Cardiac septum (tissue), 1 donor: ENCODE measurements at regions of chr1 and their contacts with region 1.

Region 1: GRCh38 chr1:157156058-157156541 is 17.9 kb upstream of the ETV3 start:
- DNase-seq: peak; percentile 90

Region 2: DNA sequence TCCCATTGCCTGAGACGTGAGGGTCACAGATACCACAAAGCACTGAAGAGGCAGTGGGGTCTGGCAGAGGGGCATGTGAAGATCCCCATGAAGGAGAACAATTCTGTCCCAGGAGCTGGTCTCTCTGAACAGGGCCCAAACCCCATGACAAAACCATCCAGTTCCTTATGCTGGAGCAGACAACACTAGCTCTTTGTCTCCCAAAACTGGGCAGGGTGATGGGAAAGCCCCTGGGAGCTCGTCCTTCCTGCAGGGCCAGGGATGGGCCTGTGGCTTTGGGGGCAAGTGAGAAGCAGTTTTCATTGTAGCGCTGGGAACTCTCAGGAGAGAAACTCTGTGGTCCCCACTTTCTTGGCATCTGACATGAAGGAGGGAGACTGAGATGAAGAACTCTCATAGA is 65.3 kb before region 1 on chr1:
- intact Hi-C with region 1: loop called (anchors 1 kb)
- DNase-seq: peak; percentile 24

Region 3: GRCh38 chr1:157199421-157199755 is 43.3 kb after region 1 on chr1:
- intact Hi-C with region 1: no loop called
- DNase-seq: no peak